GM10248 (cell line): ENCODE measurements at regions of chr16 and their contacts with region 1.

Region 1: GRCh38 chr16:84952335-84953189 is 58.8 kb downstream of the ZDHHC7 start:
- DNase-seq: peak; percentile 85
- CTCF ChIP-seq: peak; percentile 88

Region 2: GRCh38 chr16:84754353-84754856 is 198.2 kb before region 1 on chr16:
- CTCF ChIA-PET with region 1: interaction called, 108 read pairs
- POLR2A ChIA-PET with region 1: no interaction called
- DNase-seq: peak; percentile 74
- CTCF ChIP-seq: peak; percentile 63

Region 3: GRCh38 chr16:84925092-84925772 is 27.3 kb before region 1 on chr16:
- CTCF ChIA-PET with region 1: interaction called, 65 read pairs
- POLR2A ChIA-PET with region 1: no interaction called
- DNase-seq: peak; percentile 77
- CTCF ChIP-seq: peak; percentile 82

Region 4: GRCh38 chr16:84933774-84934631 is 18.6 kb before region 1 on chr16:
- CTCF ChIA-PET with region 1: interaction called, 65 read pairs
- POLR2A ChIA-PET with region 1: no interaction called
- DNase-seq: no peak
- CTCF ChIP-seq: no peak

Region 5: GRCh38 chr16:84963066-84963465 is 10.5 kb after region 1 on chr16:
- CTCF ChIA-PET with region 1: interaction called, 65 read pairs
- POLR2A ChIA-PET with region 1: no interaction called
- DNase-seq: no peak
- CTCF ChIP-seq: no peak

Region 6: DNA sequence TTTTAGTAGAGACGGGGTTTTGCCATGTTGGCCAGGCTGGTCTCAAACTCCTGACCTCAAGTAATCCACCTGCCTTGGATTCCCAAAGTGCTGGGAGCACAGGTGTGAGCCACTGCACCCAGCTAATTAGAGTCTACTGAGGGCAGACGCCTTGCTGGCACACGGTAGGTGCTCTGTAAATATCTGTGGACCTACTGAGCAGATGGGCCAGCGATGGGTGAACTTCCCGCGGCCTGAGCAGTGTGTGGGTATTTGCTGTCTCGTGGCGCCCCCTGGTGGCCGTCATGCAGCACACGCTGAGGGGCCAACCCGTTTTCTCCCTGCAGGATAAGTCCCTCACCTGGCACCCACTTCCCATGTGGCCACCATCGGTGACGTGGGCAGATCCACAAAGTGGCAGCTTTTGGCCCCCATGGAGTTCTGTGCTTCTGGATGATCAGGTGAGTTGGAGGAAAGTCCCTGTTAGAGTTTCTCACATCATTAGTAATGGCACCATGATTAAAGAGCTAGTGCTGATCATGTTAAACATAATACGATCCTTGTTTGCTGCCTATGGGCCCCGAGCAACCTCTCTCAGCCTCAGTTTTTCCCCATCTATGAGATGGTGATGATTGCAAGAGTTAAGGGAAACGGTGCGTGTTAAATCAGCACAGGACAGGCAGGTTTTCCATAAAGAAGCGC is 18.0 kb after region 1 on chr16:
- CTCF ChIA-PET with region 1: interaction called, 65 read pairs
- POLR2A ChIA-PET with region 1: no interaction called
- DNase-seq: peak; percentile 85
- CTCF ChIP-seq: peak; percentile 90

Region 7: GRCh38 chr16:84976644-84977400 is 24.3 kb after region 1 on chr16:
- CTCF ChIA-PET with region 1: interaction called, 65 read pairs
- POLR2A ChIA-PET with region 1: no interaction called
- DNase-seq: no peak
- CTCF ChIP-seq: no peak